SK-N-SH (cell line): ENCODE measurements at regions of chr7 and their contacts with region 1.

Region 1: GRCh38 chr7:129218514-129219062 is 6.2 kb upstream of the AHCYL2 start:
- DNase-seq: peak; percentile 90
- H3K4me3 ChIP-seq: peak overlapping the region in 1 of 2 experiments; percentile 25; a peak in 1 of 4 replicates
- H3K27ac ChIP-seq: no peak overlapping the region
- H3K4me1 ChIP-seq: peaks cover 0 to 8% of the 10 kb centered on the region in 2 experiments; a peak in 1 of 4 replicates
- H3K27me3 ChIP-seq: no peaks in the 10 kb centered on the region
- CTCF ChIP-seq: peak; percentile 99
- EP300 ChIP-seq: no peak
- RAD21 ChIP-seq: peak; percentile 99

Region 2: GRCh38 chr7:129163875-129164544 is 54.6 kb before region 1 on chr7:
- CTCF ChIA-PET with region 1: interaction called, 385 read pairs
- POLR2A ChIA-PET with region 1: interaction called, 6 read pairs
- DNase-seq: peak; percentile 76
- H3K4me3 ChIP-seq: no peak overlapping the region; a peak in 1 of 4 replicates
- H3K27ac ChIP-seq: no peak overlapping the region
- H3K4me1 ChIP-seq: peaks cover 0 to 10% of the 10 kb centered on the region in 2 experiments; a peak in 1 of 4 replicates
- H3K27me3 ChIP-seq: no peaks in the 10 kb centered on the region
- CTCF ChIP-seq: peak; percentile 100
- EP300 ChIP-seq: no peak
- RAD21 ChIP-seq: peak; percentile 79

Region 3: GRCh38 chr7:129247087-129247486 is 28.5 kb after region 1 on chr7:
- CTCF ChIA-PET with region 1: interaction called, 24 read pairs
- POLR2A ChIA-PET with region 1: no interaction called
- DNase-seq: no peak
- H3K4me3 ChIP-seq: no peak overlapping the region
- H3K27ac ChIP-seq: peak overlapping the region in 1 of 2 experiments; percentile 9; a peak in 1 of 4 replicates
- H3K4me1 ChIP-seq: peaks cover 0 to 2% of the 10 kb centered on the region in 2 experiments; a peak in 3 of 4 replicates
- H3K27me3 ChIP-seq: no peaks in the 10 kb centered on the region
- CTCF ChIP-seq: no peak
- EP300 ChIP-seq: no peak
- RAD21 ChIP-seq: no peak

Region 4: GRCh38 chr7:129298268-129298893 is 79.8 kb after region 1 on chr7:
- CTCF ChIA-PET with region 1: interaction called, 363 read pairs
- POLR2A ChIA-PET with region 1: interaction called, 5 read pairs
- DNase-seq: peak; percentile 65
- H3K4me3 ChIP-seq: no peak overlapping the region; a peak in 1 of 4 replicates
- H3K27ac ChIP-seq: no peak overlapping the region
- H3K4me1 ChIP-seq: no peaks in the 10 kb centered on the region
- H3K27me3 ChIP-seq: no peaks in the 10 kb centered on the region
- CTCF ChIP-seq: peak; percentile 98
- EP300 ChIP-seq: no peak
- RAD21 ChIP-seq: peak; percentile 90

Region 5: DNA sequence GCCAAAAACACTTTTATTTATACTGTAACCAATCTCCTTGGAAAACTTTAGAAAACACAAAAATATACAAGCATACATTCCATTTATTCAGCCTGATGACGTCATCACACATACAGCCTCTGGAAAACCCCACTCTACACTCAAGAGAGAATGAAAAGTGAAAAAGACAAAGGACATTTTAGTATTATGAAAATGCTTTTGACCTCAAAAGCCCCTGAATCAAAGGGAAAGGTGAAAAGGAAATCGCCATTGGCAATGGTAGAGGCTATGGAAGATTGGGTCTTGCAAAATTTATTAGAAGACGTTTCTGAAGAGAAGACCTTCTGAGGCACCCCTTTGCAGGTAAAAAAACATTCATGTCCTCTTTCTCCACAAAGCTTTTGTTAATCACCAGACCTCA is 132.7 kb after region 1 on chr7:
- CTCF ChIA-PET with region 1: interaction called, 16 read pairs
- POLR2A ChIA-PET with region 1: no interaction called
- DNase-seq: no peak
- H3K4me3 ChIP-seq: no peak overlapping the region
- H3K27ac ChIP-seq: peak overlapping the region in 1 of 2 experiments; percentile 1; a peak in 1 of 4 replicates
- H3K4me1 ChIP-seq: no peaks in the 10 kb centered on the region
- H3K27me3 ChIP-seq: no peaks in the 10 kb centered on the region
- CTCF ChIP-seq: no peak
- EP300 ChIP-seq: no peak
- RAD21 ChIP-seq: no peak

Region 6: DNA sequence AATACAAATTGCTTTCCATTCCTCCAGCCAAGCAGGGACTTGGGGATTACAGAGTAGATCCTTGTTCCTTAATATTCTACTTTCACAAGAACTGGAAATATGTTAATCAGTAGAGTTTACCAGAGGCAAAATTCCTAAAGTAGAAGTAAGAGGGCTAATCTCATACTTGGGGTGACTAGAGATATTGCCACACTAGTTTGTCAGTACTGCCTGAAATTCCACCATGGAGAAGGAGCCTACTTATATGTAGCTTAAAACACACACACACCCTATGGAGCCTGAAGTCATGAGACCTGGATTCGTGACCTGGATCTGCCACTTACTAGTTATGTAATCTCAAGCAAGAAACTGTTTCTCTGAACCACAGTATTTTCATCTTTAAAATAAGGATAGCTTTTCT is 249.5 kb after region 1 on chr7:
- CTCF ChIA-PET with region 1: interaction called, 128 read pairs
- POLR2A ChIA-PET with region 1: no interaction called
- DNase-seq: no peak
- H3K4me3 ChIP-seq: no peak overlapping the region
- H3K27ac ChIP-seq: no peak overlapping the region
- H3K4me1 ChIP-seq: peaks cover 0 to 23% of the 10 kb centered on the region in 2 experiments; a peak in 2 of 4 replicates
- H3K27me3 ChIP-seq: no peaks in the 10 kb centered on the region
- CTCF ChIP-seq: no peak
- EP300 ChIP-seq: no peak
- RAD21 ChIP-seq: no peak

Region 7: GRCh38 chr7:129801882-129802473 is 583.4 kb after region 1 on chr7:
- CTCF ChIA-PET with region 1: no interaction called
- POLR2A ChIA-PET with region 1: no interaction called
- DNase-seq: no peak
- H3K4me3 ChIP-seq: no peak overlapping the region
- H3K27ac ChIP-seq: no peak overlapping the region
- H3K4me1 ChIP-seq: peaks cover 0 to 25% of the 10 kb centered on the region in 2 experiments; a peak in 1 of 4 replicates
- H3K27me3 ChIP-seq: no peaks in the 10 kb centered on the region
- CTCF ChIP-seq: no peak
- EP300 ChIP-seq: no peak
- RAD21 ChIP-seq: no peak